ENCODE measurements at regions of chr7 and their contacts with region 1.

Region 1: GRCh38 chr7:73976761-73977618 is 51.0 kb upstream of the ELN start:
- DNase-seq: no peak
- ATAC-seq: no peak
- H3K4me3 ChIP-seq: no peak overlapping the region
- H3K27ac ChIP-seq: no peak overlapping the region
- H3K4me1 ChIP-seq: peaks cover 8% of the 10 kb centered on the region; the same call in 1 of the 2 replicates
- H3K27me3 ChIP-seq: no peaks in the 10 kb centered on the region
- CTCF ChIP-seq: no peak

Region 2: GRCh38 chr7:74012842-74013249 is 35.9 kb after region 1 on chr7:
- CTCF ChIA-PET with region 1: no interaction called
- POLR2A ChIA-PET with region 1: interaction called, 11 read pairs
- in situ Hi-C with region 1: no loop called
- intact Hi-C with region 1: no loop called
- DNase-seq: no peak
- ATAC-seq: no peak
- H3K4me3 ChIP-seq: no peak overlapping the region
- H3K27ac ChIP-seq: no peak overlapping the region
- H3K4me1 ChIP-seq: no peaks in the 10 kb centered on the region
- H3K27me3 ChIP-seq: no peaks in the 10 kb centered on the region
- CTCF ChIP-seq: no peak

Region 3: DNA sequence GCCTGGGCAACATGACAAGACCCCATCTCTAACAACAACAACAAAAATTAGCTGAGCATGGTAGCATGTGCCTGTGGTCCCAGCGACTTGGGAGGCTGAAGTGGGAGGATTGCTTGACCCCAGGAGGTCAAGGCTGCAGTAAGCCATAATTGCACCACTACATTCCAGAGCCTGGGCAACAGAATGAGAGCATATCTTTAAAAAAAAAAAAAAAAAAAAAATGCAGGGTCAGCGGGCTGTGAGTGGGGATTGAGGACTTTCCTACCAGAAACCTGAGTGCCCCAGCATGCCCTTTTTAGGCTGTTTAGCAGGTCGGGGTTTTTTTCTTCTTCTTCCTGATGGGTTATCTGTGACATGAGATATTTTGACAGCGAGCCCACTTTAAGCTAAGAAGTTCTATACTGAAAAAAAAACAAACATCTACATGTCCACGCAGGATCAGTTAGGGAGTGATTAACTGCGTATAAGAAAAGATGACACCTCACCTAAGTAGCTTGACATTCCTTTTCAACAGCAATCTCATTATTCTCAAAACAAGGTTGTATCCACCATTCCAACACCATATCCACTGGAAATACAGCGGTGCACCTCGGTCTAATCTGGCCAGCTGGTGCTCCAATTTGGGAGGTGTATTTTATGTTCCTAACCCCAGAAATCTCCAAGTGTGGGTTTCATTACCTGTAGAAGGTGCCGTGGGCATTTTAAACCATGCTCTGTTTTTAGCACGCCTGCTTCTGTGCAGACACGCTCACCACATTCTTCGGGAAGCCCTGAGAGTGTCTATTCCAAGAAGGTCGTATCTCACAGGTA is 291.0 kb after region 1 on chr7:
- CTCF ChIA-PET with region 1: interaction called, 21 read pairs
- POLR2A ChIA-PET with region 1: no interaction called
- in situ Hi-C with region 1: no loop called
- intact Hi-C with region 1: no loop called
- DNase-seq: no peak
- ATAC-seq: no peak
- H3K4me3 ChIP-seq: no peak overlapping the region
- H3K27ac ChIP-seq: no peak overlapping the region
- H3K4me1 ChIP-seq: peaks cover 10% of the 10 kb centered on the region
- H3K27me3 ChIP-seq: no peaks in the 10 kb centered on the region
- CTCF ChIP-seq: no peak